Panc1 (cell line): ENCODE measurements at regions of chr19 and their contacts with region 1.

Region 1: DNA sequence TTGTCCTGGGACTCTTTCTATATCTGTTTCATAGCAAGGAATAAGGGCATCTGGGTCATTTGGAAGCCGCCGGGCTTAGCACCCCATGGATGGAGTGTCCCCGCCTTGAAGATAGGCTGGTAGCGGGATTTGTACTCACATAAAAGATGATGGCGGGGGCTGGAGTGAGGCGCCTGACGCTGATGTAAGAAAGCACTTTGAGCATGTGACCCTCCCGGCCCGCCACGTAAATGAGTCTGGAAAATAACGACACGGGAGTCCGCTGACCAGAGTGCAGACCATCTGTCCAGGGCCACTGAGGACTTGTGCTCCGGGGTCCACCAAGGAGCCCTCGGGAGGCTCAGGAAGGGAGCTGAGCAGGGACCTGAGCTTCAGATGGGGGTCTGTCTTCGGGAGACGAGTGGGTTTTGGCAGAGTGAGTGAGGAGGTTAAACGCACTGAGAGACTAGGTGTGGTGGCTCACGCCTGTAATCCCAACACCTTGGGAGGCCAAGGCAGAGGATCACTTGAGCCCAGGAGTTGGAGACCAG is 25.8 kb downstream of the SLC7A9 start:
- DNase-seq: no peak
- ATAC-seq: no peak
- H3K4me3 ChIP-seq: no peak overlapping the region
- H3K27ac ChIP-seq: no peak overlapping the region
- H3K4me1 ChIP-seq: no peaks in the 10 kb centered on the region
- H3K27me3 ChIP-seq: no peaks in the 10 kb centered on the region
- CTCF ChIP-seq: no peak

Region 2: GRCh38 chr19:32373585-32374295 is 470.0 kb before region 1 on chr19:
- CTCF ChIA-PET with region 1: no interaction called
- POLR2A ChIA-PET with region 1: no interaction called
- in situ Hi-C with region 1: no loop called
- intact Hi-C with region 1: no loop called
- DNase-seq: peak; percentile 100
- ATAC-seq: peak; percentile 98
- H3K4me3 ChIP-seq: peak overlapping the region; percentile 2 to 48; a peak in 3 of 4 replicates
- H3K27ac ChIP-seq: peak overlapping the region; percentile 95
- H3K4me1 ChIP-seq: peaks cover 35% of the 10 kb centered on the region
- H3K27me3 ChIP-seq: no peaks in the 10 kb centered on the region
- CTCF ChIP-seq: no peak

Region 3: GRCh38 chr19:32437096-32437495 is 406.7 kb before region 1 on chr19:
- CTCF ChIA-PET with region 1: no interaction called
- POLR2A ChIA-PET with region 1: interaction called, 15 read pairs
- in situ Hi-C with region 1: no loop called
- intact Hi-C with region 1: no loop called
- DNase-seq: no peak
- ATAC-seq: no peak
- H3K4me3 ChIP-seq: no peak overlapping the region
- H3K27ac ChIP-seq: no peak overlapping the region
- H3K4me1 ChIP-seq: no peaks in the 10 kb centered on the region
- H3K27me3 ChIP-seq: no peaks in the 10 kb centered on the region
- CTCF ChIP-seq: no peak

Region 4: DNA sequence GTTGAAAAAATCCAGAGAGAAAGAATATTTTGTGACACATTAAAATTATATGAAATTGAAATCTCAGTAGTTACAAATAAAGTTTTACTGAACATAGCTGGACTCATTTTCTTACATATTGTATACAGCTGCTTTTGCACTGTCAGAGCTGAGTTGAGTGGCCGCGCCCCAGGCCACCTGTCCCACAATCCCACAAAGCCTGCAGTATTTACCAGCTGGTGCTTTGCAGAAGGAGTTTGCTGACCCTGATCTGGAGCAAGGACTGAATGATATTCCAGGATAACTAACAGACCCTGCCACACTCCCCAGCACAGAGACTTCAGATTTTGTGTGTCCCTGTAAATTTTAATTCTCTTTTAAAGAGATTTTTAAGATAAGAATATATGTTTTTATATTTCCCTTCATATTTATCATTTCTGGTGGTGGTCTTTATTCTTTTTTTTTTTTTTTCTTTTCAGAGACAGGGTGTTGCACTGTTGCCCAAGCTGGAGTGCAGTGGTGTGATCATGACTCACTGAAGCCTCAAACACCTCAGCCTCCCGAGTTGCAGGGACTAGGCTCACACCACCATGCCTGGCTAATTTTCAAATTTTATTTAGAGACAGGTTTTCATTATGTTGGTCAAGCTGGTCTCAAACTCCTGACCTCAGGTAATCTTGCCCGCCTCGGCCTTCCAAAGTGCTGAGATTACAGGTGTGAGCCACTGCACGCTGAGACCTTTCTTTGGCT is 75.7 kb before region 1 on chr19:
- CTCF ChIA-PET with region 1: no interaction called
- POLR2A ChIA-PET with region 1: no interaction called
- in situ Hi-C with region 1: no loop called
- intact Hi-C with region 1: no loop called
- DNase-seq: no peak
- ATAC-seq: no peak
- H3K4me3 ChIP-seq: no peak overlapping the region
- H3K27ac ChIP-seq: no peak overlapping the region
- H3K4me1 ChIP-seq: no peaks in the 10 kb centered on the region
- H3K27me3 ChIP-seq: no peaks in the 10 kb centered on the region; the same call in 1 of the 2 replicates
- CTCF ChIP-seq: no peak

Region 5: DNA sequence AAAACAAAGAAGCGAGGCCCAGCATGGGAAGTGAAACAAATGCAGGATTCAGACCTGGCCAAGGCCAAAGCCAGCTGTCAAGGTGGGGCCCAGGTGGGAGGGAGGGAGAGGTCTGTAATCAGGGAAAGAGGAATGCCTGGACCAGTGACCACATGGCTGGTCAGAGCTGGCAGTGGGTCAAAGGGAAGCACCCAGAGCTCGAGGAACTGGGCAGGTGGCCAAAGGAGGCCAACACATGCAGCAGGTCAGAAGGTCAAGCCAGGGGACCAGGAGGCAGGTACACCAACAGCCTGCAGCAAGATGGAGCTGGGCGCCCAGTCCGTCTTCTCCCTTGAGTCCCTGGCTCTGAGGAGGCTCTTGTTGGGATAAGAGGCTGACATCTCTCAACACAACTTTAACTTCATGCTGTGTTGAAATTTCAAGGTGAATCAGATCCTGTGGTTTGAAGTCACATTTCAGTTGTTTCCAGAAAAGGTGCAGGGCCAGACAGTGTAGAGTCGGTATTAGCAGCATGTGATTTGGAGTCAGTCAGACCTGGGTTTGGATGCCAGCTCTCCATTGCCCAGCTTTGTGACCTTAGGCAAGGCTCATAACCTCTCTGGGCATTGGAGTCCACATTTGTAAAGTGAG is 254.4 kb after region 1 on chr19:
- CTCF ChIA-PET with region 1: no interaction called
- POLR2A ChIA-PET with region 1: no interaction called
- in situ Hi-C with region 1: no loop called
- intact Hi-C with region 1: no loop called
- DNase-seq: peak; percentile 95
- ATAC-seq: peak; percentile 66
- H3K4me3 ChIP-seq: no peak overlapping the region
- H3K27ac ChIP-seq: peak overlapping the region; percentile 48
- H3K4me1 ChIP-seq: peaks cover 15% of the 10 kb centered on the region
- H3K27me3 ChIP-seq: no peaks in the 10 kb centered on the region
- CTCF ChIP-seq: no peak

Region 6: GRCh38 chr19:34539396-34539795 is 1695.6 kb after region 1 on chr19:
- CTCF ChIA-PET with region 1: no interaction called
- POLR2A ChIA-PET with region 1: no interaction called
- in situ Hi-C with region 1: no loop called
- intact Hi-C with region 1: loop called (anchors 10 kb)
- DNase-seq: no peak
- ATAC-seq: no peak
- H3K4me3 ChIP-seq: no peak overlapping the region
- H3K27ac ChIP-seq: no peak overlapping the region
- H3K4me1 ChIP-seq: no peaks in the 10 kb centered on the region
- H3K27me3 ChIP-seq: peaks cover 11% of the 10 kb centered on the region
- CTCF ChIP-seq: no peak